ENCODE measurements at regions of chr19 and their contacts with region 1.

Region 1: DNA sequence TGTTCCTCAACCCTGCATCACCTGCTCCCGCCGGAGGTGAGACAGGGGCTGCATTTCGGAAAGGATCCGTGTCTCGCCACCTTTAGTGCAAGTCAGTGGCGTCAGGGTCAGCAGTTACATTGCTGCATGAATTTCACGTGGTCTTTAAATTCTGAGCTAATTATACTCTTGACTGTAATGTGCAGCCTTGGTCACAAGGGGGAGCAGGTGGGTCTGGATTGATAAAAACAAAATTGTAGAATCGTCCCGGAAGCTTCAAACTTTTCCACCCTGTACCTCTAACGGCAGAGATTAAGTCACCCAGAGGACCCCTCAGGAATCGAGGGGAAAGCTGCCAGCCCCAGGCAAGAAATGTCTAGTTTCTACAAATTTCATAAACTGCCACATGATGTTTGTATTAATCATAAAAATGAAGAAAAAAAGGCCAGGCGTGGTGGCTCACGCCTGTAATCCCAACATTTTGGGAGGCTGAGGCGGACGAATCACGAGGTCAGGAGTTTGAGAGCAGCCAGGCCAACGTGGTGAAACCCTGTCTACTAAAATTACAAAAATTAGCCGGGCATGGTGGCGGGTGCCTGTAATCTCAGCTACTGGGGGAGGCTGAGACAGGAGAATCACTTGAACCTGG is 20.2 kb downstream of the BBC3 start:
- DNase-seq: peak; percentile 50
- H3K4me3 ChIP-seq: no peak overlapping the region
- H3K27me3 ChIP-seq: no peaks in the 10 kb centered on the region
- CTCF ChIP-seq: peak; percentile 78

Region 2: GRCh38 chr19:47145639-47146486 is 64.9 kb before region 1 on chr19:
- CTCF ChIA-PET with region 1: interaction called, 19 read pairs
- POLR2A ChIA-PET with region 1: no interaction called
- DNase-seq: no peak
- H3K4me3 ChIP-seq: no peak overlapping the region
- H3K27me3 ChIP-seq: no peaks in the 10 kb centered on the region
- CTCF ChIP-seq: no peak

Region 3: DNA sequence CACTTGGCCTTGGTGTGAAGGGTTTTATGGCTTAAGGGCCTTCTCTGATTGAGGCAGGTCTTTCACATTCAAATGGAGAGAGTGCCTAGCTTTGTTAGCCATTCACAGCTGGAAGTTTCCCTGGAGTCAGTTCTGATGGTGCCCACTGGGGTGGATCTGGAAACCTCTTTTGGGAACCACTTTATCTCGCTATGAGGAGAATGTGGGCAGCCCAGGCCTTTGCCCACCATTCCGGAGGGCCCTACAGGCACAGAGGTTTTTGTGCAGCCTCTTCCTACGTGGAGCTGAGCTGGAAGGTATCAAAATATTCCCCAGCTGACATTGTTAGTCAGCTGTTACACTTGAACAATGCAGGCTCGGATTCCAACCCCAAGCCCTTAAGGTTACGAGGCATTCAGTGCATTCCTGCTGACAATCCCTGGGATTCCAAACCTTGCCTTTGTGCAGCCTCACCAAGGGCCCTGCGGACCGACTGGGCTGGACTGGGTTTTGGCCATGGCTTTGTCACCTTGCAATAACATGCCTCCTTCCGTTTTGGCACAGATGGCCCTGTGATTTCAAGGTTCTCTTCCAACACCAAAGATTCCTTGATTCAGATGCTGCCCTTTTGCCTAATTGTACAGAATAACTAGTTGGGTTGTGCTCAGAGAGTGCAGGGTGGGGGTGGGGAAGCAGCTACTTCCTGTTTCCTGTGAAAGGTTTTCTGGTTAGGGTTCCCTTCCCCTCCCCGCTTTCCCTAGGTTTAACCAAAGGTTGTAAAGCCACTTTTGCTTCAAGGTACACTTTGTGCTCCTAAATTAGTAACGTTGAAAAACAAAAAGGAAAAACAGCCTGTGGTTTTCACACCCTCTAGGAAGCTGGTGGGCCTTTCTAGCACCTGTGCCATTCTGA is 53.1 kb before region 1 on chr19:
- CTCF ChIA-PET with region 1: interaction called, 13 read pairs
- POLR2A ChIA-PET with region 1: no interaction called
- DNase-seq: no peak
- H3K4me3 ChIP-seq: no peak overlapping the region
- H3K27me3 ChIP-seq: no peaks in the 10 kb centered on the region
- CTCF ChIP-seq: no peak

Region 4: DNA sequence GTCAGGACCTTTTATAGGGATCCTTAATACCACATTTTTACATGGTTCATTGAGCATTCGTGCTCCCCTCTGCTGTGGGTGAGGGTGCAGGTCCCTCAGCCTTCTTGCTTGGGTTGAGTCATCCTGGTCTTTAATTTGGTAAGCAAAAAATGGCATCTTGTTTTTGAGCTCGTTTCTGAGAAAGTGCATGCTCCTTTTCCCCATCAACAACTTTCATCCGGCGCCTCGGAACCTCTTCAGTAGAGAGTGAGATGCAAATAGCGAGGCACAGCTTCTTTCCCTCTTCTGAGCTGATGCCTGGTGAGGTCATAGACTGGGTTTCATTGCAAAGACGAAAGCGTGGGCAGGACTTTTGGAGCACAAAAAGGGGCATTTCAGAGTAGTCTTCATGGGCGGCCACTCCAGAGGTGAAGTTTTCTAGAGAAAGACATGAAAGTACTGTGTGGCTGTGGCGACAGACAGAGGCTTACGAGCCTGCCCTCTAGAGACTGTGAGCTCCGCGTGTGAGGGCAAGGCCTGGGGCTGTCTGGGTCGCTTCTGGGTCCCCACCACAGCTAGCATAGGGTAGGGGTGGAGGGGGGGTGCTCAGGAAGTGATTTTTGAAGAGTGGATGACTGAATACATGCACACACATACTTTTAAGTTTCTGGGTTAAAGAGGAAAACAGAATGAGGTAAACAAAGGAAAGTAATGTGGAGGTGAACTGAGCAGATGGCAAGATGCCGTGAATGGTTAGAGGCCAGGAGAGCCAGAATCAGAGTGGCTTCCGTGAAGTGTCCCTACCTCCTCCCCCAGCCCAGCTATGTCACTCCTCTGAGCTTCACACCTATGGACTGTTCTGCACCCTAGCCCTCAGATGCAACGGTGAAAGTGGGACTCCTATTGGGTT is 24.1 kb before region 1 on chr19:
- CTCF ChIA-PET with region 1: interaction called, 11 read pairs
- POLR2A ChIA-PET with region 1: no interaction called
- DNase-seq: no peak
- H3K4me3 ChIP-seq: no peak overlapping the region
- H3K27me3 ChIP-seq: no peaks in the 10 kb centered on the region
- CTCF ChIP-seq: no peak

Region 5: GRCh38 chr19:47225746-47226425 is 15.1 kb after region 1 on chr19:
- CTCF ChIA-PET with region 1: interaction called, 51 read pairs
- POLR2A ChIA-PET with region 1: interaction called, 6 read pairs
- DNase-seq: no peak
- H3K4me3 ChIP-seq: peak overlapping the region; percentile 77
- H3K27me3 ChIP-seq: no peaks in the 10 kb centered on the region
- CTCF ChIP-seq: 0 out of 2 replicates have a peak, but pooled peaks have one; percentile 6

Region 6: GRCh38 chr19:47256688-47257443 is 46.1 kb after region 1 on chr19:
- CTCF ChIA-PET with region 1: interaction called, 17 read pairs
- POLR2A ChIA-PET with region 1: interaction called, 3 read pairs
- DNase-seq: peak; percentile 87
- H3K4me3 ChIP-seq: peak overlapping the region; percentile 63
- H3K27me3 ChIP-seq: no peaks in the 10 kb centered on the region
- CTCF ChIP-seq: no peak